K562 (cell line): ENCODE measurements at regions of chr2 and their contacts with region 1.

Region 1: GRCh38 chr2:191677646-191678436 is at the start of gene NABP1:
- DNase-seq: peak; percentile 93 to 95 (median 94)
- ATAC-seq: peak; percentile 80
- H3K4me3 ChIP-seq: peak within 1 kb of the TSS; percentile 64
- H3K27ac ChIP-seq: peak within 1 kb of the TSS; percentile 92
- H3K4me1 ChIP-seq: peaks cover 3 to 17% of the 10 kb centered on the region in 2 experiments
- H3K27me3 ChIP-seq: no peaks in the 10 kb centered on the region
- CTCF ChIP-seq: no peak
- EP300 ChIP-seq: no peak
- POLR2A ChIP-seq: peak; percentile 99
- RAD21 ChIP-seq: 0 out of 4 replicates have a peak, but pooled peaks of 1 of the 2 experiments have one; percentile 7
- polyA plus RNA-seq, gene NABP1: 12.8 to 14.9 TPM

Region 2: DNA sequence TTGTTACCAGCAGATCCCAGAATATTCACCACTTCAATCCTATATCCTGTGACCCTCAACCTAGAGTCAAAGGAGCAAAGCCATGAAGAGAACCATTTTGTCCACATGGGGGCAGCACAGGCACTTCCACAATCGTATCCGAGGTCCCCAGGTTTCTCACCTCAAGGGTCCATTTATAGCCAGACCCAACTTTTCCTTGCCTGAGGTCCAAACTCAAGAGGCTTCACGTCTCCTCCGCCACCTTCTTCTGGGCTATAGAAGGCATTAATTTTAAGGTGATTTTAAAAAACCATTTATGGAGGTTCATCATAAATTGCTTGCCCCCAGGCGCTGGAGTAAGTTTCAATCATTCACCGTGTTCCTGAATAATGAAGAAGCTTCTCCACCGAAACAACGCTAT is 111.5 kb before region 1 on chr2:
- CTCF ChIA-PET with region 1: interaction called, 3 read pairs
- POLR2A ChIA-PET with region 1: interaction called, 10 read pairs
- in situ Hi-C with region 1: loop called (anchors 5 kb)
- intact Hi-C with region 1: loop called (anchors 1 kb)
- DNase-seq: peak; percentile 59 to 86 (median 65)
- ATAC-seq: peak; percentile 91
- H3K4me3 ChIP-seq: no peak overlapping the region
- H3K27ac ChIP-seq: peak overlapping the region; percentile 71; the same call in 2 of the 3 replicates
- H3K4me1 ChIP-seq: peaks cover 0 to 36% of the 10 kb centered on the region in 2 experiments; a peak in 3 of 5 replicates
- H3K27me3 ChIP-seq: no peaks in the 10 kb centered on the region
- CTCF ChIP-seq: peak; percentile 73 to 77 (median 75)
- EP300 ChIP-seq: no peak
- POLR2A ChIP-seq: no peak
- RAD21 ChIP-seq: peak; percentile 71 to 75

Region 3: DNA sequence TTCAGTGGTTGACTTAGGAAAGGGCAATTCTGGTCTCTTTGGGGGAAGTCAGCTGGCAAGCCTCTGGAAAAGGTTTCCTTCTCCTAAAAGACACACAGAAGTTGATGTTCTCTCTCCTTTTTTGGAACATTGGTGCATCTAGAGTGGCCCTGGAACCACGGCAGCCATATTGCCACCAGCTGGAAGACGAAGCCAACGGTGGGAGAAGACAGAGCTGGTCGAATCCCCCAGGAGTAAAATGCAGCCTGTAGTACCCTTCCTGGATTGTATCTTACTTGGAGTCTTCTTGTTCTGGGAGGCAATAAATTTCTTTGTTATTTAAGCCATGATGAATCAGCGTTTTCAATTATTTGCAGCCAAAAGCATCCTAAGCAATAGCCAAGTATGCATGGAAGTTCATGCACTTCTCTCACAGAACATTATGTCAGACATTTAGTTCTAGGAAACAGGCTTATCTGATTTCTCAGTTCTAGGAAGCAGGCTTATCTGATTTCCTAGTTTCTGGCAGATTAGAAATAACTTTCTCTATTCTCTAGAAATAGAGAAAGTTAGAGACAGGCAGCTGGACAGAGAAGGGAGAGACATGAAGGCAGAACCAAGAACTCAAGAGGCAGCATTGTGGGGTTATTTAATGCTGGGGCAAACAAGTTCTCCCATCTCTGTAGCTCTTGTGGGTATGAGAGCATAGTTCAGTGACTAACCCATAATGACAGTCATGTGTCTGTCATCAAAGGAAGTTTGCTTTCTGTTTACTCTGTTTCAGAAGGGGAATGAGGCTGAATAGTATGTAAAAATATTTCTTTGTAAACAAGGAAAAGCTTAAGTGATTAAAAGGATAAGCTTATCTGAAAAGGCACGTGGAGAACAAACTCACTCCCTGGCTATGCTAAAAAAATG is 40.4 kb before region 1 on chr2:
- CTCF ChIA-PET with region 1: no interaction called
- POLR2A ChIA-PET with region 1: interaction called, 16 read pairs
- in situ Hi-C with region 1: no loop called
- intact Hi-C with region 1: loop called (anchors 2 kb)
- DNase-seq: peak; percentile 25 to 72 (median 40)
- ATAC-seq: peak; percentile 81
- H3K4me3 ChIP-seq: peak overlapping the region; percentile 22
- H3K27ac ChIP-seq: peak overlapping the region; percentile 85
- H3K4me1 ChIP-seq: peaks cover 0 to 30% of the 10 kb centered on the region in 2 experiments; a peak in 4 of 5 replicates
- H3K27me3 ChIP-seq: no peaks in the 10 kb centered on the region
- CTCF ChIP-seq: no peak
- EP300 ChIP-seq: peak; percentile 88
- POLR2A ChIP-seq: no peak
- RAD21 ChIP-seq: peak in 1 of 2 experiments; percentile 21; a peak in 1 of 4 replicates

Region 4: DNA sequence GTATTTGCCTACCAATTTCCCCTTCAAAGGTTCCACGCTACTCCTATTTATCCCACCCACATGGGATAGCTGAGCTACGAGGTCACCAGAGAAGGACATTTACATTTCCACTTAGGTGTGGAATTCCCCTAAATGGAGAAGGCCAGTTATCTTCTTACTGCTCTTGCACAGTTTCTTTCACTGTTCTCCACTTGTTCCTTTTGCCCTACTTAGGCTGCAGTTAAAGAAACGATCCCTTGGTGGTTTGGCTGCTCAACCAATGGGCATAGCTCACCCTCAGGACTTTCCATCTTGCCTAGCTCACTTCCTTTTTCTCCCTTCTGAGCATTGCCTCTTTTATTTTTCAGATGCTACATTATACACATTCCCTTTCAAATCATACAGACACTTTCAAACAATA is 11.1 kb before region 1 on chr2:
- CTCF ChIA-PET with region 1: no interaction called
- POLR2A ChIA-PET with region 1: interaction called, 18 read pairs
- in situ Hi-C with region 1: no loop called
- intact Hi-C with region 1: no loop called
- DNase-seq: peak in 2 of 4 experiments; percentile 10 to 11
- ATAC-seq: peak; percentile 55
- H3K4me3 ChIP-seq: no peak overlapping the region
- H3K27ac ChIP-seq: no peak overlapping the region
- H3K4me1 ChIP-seq: peaks cover 0 to 15% of the 10 kb centered on the region in 2 experiments; a peak in 2 of 5 replicates
- H3K27me3 ChIP-seq: no peaks in the 10 kb centered on the region
- CTCF ChIP-seq: no peak
- EP300 ChIP-seq: no peak
- POLR2A ChIP-seq: no peak
- RAD21 ChIP-seq: no peak

Region 5: DNA sequence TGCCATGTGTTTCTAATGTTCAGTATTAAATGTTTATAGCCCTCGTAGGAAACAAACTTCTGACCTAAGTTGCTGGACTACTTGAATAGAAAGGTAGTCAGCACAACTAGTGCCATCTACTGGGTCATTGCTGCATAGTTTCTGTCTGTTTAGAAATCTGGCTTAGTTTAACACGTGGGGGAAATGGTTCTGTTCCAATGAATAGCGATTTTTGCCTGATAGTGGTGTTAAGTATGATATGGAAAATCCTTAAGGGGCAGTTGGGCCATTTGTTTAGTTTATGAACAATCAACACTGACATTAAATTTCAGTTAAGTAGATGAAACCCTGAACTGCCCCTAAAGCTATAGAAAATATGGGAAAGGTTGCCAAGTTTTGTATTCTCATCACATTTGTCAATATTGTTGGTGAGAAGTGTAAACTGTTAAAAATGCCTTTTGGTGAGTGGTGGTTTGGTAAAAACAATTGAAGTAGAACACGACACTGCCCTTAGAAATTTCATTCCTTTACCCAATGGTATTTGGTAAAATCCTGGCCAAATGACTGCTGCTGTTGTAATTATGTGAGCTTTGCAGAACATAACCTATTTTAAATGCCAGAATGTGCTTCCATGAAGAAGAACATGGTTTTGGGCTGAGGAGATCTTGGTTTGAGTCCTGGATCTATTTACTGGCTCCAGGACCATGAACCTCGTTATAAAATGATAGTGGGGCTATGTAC is 13.3 kb after region 1 on chr2:
- CTCF ChIA-PET with region 1: no interaction called
- POLR2A ChIA-PET with region 1: interaction called, 23 read pairs
- in situ Hi-C with region 1: no loop called
- intact Hi-C with region 1: no loop called
- DNase-seq: peak; percentile 47 to 75 (median 54)
- ATAC-seq: peak; percentile 73
- H3K4me3 ChIP-seq: no peak overlapping the region
- H3K27ac ChIP-seq: peak overlapping the region; percentile 55; the same call in 2 of the 3 replicates
- H3K4me1 ChIP-seq: peaks cover 0 to 7% of the 10 kb centered on the region in 2 experiments; a peak in 3 of 5 replicates
- H3K27me3 ChIP-seq: no peaks in the 10 kb centered on the region
- CTCF ChIP-seq: peak; percentile 58 to 78 (median 66); a peak in 5 of 6 replicates
- EP300 ChIP-seq: 0 out of 2 replicates have a peak, but pooled peaks have one; percentile 17
- POLR2A ChIP-seq: peak; percentile 52
- RAD21 ChIP-seq: peak; percentile 85 to 87

Region 6: GRCh38 chr2:191836853-191837769 is 159.3 kb after region 1 on chr2:
- CTCF ChIA-PET with region 1: no interaction called
- POLR2A ChIA-PET with region 1: no interaction called
- in situ Hi-C with region 1: no loop called
- intact Hi-C with region 1: loop called (anchors 2 kb)
- DNase-seq: peak; percentile 59 to 89 (median 67)
- ATAC-seq: peak; percentile 73
- H3K4me3 ChIP-seq: peak overlapping the region; percentile 50
- H3K27ac ChIP-seq: peak overlapping the region; percentile 95
- H3K4me1 ChIP-seq: peaks cover 8 to 49% of the 10 kb centered on the region in 2 experiments
- H3K27me3 ChIP-seq: no peaks in the 10 kb centered on the region
- CTCF ChIP-seq: no peak
- EP300 ChIP-seq: peak; percentile 98
- POLR2A ChIP-seq: 0 out of 2 replicates have a peak, but pooled peaks have one; percentile 38
- RAD21 ChIP-seq: no peak